Left cardiac atrium (tissue), 4 donors: ENCODE measurements at regions of chr9 and their contacts with region 1.

Region 1: DNA sequence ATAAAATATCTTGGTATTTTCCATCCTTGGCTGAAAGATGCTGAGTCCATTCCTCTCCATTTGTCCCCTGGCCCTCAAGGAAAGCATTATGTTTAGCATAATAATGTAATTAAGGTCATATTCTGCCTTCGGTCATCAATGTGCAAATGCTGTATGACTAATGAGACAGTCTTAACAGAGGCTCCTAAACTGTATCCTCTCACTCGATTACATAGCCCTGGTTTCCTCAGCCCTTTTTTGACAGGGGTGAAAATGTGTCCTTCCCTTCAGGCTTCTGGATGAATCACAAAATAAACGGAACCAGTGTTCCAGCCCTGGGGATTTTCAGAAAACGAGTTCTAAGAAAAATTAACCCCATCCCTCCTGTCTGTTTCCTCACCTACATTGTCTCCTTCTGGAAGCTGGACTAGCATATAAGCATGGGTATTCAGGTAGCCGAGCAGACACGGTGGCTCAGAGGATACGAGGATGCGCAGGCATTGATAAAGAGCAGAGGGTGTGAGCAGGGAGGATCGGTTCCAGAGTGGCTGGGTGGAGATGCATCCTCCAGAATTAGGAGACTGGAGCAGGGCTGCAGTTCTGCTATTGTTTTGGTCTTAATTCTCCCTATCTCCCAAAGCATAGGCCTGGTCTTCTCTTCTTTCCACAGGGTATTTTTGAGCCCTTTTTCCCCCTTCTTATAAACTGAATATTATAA is 742.9 kb downstream of the TLR4 start:
- DNase-seq: no peak
- ATAC-seq: no peak

Region 2: DNA sequence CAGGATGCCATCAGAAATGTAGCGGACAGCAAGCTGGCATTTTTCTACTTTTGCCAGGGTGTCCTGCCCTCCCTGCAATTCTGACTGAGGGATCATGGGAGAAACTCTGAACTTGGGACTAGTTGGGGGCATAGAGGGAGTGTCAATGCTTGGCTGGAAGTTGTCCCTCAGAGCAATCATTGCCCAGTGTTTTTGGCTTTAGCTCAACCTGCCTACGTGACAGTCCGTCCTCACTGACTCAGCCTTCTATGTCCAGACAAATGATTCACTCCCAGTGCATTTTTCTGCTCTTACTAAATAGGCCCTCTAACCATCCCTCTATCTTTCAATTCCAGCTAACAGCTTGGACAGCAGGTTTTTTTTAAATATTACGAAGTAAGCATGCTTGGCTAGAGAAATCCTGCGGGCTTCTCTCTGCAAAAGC is 115.5 kb before region 1 on chr9:
- intact Hi-C with region 1: loop called in 1 of 2 experiments (anchors 10 kb)
- DNase-seq: peak; percentile 35
- ATAC-seq: peak; percentile 97 to 98

Region 3: GRCh38 chr9:118414676-118415075 is 32.4 kb before region 1 on chr9:
- intact Hi-C with region 1: no loop called
- DNase-seq: no peak
- ATAC-seq: no peak